ENCODE measurements at regions of chr4 and their contacts with region 1.

Region 1: DNA sequence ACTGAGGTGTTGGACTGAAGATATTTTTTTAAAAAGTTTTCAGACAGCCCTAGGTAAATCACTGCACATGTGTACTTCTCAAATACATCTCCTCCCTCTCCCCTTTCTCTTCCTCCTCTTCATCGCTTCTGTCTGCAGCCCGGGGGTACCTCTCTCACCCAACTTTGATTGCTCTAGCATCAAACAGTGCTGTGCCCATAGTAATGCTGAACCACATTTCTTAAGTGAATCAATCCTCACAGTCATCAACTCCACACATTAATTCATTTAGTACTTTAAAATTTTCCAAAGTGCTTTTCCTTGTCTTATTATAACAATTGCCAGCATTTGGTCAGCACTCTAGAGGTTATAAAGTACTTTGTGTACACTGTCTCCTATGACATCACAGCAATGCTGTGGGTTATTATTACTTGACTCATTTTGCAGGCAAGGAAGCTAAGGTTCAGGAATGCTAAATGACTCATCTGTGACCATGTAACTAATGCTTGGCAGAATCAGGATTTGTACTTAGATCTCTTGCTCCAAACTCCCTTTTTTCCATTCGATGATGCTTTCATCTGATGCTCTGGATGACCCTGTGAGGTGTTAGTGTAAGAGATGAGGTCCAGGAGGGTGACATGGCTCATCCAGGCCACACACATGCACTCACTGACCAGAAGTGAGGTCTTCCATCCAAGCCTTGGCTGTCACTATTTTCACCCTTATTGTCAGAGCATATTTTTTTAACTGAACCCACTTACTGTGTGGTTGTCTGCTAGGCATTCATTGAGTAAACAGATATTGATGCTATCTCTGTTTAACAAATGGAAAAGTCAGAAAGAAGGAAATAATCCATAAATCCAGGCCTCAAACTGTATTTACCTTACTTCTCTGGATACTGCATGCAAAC is 58.8 kb downstream of the RHOH start:
- DNase-seq: no peak
- ATAC-seq: peak; percentile 22 to 27
- H3K4me3 Mint-ChIP-seq: peak overlapping the region; percentile 16 to 78 (median 62)
- H3K27ac Mint-ChIP-seq: peak overlapping the region; percentile 84 to 97 (median 94)
- H3K4me1 Mint-ChIP-seq: peaks cover 39 to 77% (median 70%) of the 10 kb centered on the region in 4 donors
- H3K27me3 Mint-ChIP-seq: no peaks in the 10 kb centered on the region

Region 2: GRCh38 chr4:40121515-40121914 is 134.1 kb before region 1 on chr4:
- POLR2A ChIA-PET with region 1: no interaction called
- DNase-seq: peak in 1 of 10 donors; percentile 3
- ATAC-seq: no peak
- H3K4me3 Mint-ChIP-seq: peak overlapping the region in 1 of 10 donors; percentile 35
- H3K27ac Mint-ChIP-seq: peak overlapping the region in 8 of 10 donors; percentile 17 to 87 (median 62)
- H3K4me1 Mint-ChIP-seq: peaks cover 9 to 41% (median 40%) of the 10 kb centered on the region in 4 donors
- H3K27me3 Mint-ChIP-seq: no peaks in the 10 kb centered on the region

Region 3: DNA sequence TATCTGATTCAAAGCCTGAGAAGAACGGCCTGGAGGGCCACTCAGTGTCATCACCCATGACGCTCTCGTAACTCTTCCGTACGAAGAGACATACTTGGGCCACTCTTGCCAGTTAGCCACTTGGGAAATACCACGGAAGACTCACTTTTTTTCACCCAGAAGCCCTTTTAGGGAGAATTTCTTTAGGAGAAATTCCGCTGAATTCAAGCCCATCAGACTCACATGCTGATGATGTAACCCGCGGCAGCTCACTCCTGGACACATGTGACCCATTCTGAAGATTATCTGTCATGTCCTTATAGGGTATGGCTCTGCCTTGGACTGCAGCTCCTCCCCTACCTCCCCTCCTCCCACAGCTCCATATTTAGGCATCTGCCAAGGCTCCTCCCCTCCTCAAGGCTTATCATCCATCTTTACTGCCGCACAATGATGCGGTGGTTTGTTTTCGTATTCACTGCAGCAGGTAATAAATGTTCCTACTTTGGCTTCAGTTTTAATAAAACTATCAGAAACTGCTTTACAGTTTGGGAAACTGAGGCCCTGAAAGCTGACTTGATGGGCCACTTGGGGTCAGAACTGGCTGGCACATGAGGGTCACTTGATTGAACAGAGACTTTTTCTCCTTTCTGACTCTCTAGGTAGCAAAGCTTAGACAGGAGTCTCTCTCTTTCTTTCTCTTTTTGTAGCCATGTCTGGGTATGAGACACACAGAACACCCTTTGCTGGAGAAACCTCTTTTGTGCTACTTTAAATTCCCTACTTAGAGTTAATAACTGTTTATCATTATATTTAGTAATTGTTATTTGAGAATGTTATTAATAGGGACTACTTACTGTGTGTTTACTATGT is 16.7 kb before region 1 on chr4:
- POLR2A ChIA-PET with region 1: interaction called, 13 read pairs
- DNase-seq: peak; percentile 32 to 91 (median 78)
- ATAC-seq: peak; percentile 76 to 92
- H3K4me3 Mint-ChIP-seq: peak overlapping the region; percentile 70 to 89 (median 78)
- H3K27ac Mint-ChIP-seq: peak overlapping the region; percentile 92 to 99 (median 97)
- H3K4me1 Mint-ChIP-seq: peaks cover 43 to 93% (median 91%) of the 10 kb centered on the region in 4 donors
- H3K27me3 Mint-ChIP-seq: no peaks in the 10 kb centered on the region

Region 4: DNA sequence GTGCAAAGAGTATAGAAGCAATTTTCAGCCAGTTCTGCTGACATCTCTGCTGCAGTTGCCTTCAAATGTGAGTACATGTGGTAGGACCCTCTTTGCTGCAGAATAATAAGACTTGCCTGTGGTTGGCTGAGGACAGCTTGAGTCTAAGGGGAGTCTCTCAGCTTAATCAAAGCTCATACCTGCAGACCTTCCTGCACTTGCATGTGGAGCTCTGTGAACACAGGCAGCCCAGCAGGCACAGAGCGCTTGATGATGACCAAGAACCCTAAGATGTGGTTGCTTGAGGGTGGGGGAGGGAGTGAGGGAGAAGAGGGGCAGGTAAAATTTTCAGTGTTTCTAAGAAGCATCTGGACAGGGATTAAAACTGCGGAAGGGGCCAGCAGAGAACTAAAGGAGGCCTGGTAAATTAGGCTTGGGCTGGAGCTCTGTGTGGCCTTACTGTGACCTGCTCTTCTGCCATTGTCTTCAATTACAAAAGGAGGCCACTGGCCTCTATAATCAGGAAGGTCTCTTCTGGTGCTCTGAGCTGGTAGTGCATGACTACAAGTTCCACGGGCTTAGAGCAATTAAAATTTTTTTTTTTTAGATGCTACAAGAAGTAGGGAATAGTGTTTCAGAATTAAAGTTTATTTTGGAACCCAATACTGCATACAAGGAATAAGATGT is 19.6 kb after region 1 on chr4:
- POLR2A ChIA-PET with region 1: interaction called, 21 read pairs
- DNase-seq: no peak
- ATAC-seq: peak; percentile 75 to 81
- H3K4me3 Mint-ChIP-seq: peak overlapping the region in 9 of 10 donors; percentile 28 to 79 (median 57)
- H3K27ac Mint-ChIP-seq: peak overlapping the region; percentile 39 to 91 (median 78)
- H3K4me1 Mint-ChIP-seq: peaks cover 26 to 52% (median 44%) of the 10 kb centered on the region in 4 donors
- H3K27me3 Mint-ChIP-seq: no peaks in the 10 kb centered on the region

Region 5: DNA sequence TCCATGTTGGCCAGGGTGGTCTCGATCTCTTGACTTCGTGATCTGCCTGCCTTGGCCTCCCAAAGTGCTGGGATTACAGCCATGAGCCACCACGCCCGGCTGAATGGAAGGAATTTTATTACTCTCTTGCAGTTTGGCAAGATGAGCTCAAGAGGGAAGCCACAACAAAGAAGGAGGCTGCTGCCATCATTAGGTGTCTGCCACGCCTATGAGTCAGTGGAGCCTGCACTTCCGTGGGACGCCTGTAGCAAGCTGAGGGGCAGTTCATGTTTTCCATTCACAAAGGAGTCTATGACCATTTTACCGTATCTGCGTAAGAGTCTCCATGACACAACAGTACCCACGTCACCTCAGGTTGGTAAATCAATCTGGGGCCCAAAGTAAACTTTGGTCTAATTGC is 28.3 kb after region 1 on chr4:
- POLR2A ChIA-PET with region 1: interaction called, 21 read pairs
- DNase-seq: peak; percentile 35 to 89 (median 74)
- ATAC-seq: peak; percentile 89 to 98
- H3K4me3 Mint-ChIP-seq: peak overlapping the region; percentile 29 to 77 (median 68)
- H3K27ac Mint-ChIP-seq: peak overlapping the region; percentile 88 to 98 (median 94)
- H3K4me1 Mint-ChIP-seq: peaks cover 33 to 84% (median 80%) of the 10 kb centered on the region in 4 donors
- H3K27me3 Mint-ChIP-seq: no peaks in the 10 kb centered on the region

Region 6: DNA sequence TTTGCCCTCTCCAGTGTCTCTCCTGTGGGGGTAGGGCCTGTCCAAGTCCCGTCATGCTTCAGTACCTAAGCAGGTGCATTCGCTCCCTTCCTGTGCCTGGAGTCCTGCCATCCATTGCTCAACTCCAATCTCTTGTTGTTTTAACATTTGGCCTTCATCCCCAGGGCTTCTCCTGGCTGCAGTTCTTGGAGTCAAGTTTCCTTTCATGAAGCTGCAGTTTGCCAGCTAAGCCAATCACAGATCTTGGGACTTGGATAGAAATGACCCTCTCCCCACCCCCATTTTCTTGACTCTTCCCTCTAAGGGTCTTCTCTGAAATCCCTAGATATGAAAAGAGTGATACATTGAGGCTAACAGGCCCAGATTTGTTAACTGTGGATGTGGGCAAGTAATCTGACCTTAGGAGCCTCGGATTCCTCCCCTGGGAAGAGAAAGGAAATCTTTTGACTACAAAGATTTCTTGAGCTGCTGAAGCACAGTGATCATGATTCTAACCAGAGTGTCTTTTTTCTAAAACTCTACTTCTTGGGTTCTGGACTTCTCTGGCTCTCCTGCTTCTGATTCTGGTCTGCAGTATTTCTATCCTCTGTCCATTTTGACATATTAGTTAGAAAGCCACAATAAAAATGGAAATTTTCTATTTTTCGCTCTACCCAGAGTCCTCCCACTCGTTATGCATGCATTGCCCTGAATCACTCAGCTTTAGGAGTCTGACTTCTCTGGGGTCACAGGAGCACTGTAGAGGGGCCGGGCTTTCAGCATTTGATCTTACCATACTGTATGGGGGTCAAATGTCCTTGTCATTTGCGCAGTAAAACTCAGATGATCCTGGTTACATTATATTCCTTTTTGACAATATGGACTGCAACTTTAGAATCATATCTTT is 140.5 kb after region 1 on chr4:
- POLR2A ChIA-PET with region 1: no interaction called
- DNase-seq: no peak
- ATAC-seq: no peak
- H3K4me3 Mint-ChIP-seq: no peak overlapping the region
- H3K27ac Mint-ChIP-seq: peak overlapping the region in 1 of 10 donors; percentile 73
- H3K4me1 Mint-ChIP-seq: no peaks in the 10 kb centered on the region
- H3K27me3 Mint-ChIP-seq: no peaks in the 10 kb centered on the region

Region 7: GRCh38 chr4:40607221-40607620 is 351.6 kb after region 1 on chr4:
- POLR2A ChIA-PET with region 1: no interaction called
- DNase-seq: no peak
- ATAC-seq: no peak
- H3K4me3 Mint-ChIP-seq: no peak overlapping the region
- H3K27ac Mint-ChIP-seq: no peak overlapping the region
- H3K4me1 Mint-ChIP-seq: no peaks in the 10 kb centered on the region
- H3K27me3 Mint-ChIP-seq: no peaks in the 10 kb centered on the region

Measured in naive thymus-derived CD8-positive, alpha-beta T cell (primary cell).